Pancreas (tissue), 10 donors: ENCODE measurements at regions of chrX and their contacts with region 1.

Region 1: DNA sequence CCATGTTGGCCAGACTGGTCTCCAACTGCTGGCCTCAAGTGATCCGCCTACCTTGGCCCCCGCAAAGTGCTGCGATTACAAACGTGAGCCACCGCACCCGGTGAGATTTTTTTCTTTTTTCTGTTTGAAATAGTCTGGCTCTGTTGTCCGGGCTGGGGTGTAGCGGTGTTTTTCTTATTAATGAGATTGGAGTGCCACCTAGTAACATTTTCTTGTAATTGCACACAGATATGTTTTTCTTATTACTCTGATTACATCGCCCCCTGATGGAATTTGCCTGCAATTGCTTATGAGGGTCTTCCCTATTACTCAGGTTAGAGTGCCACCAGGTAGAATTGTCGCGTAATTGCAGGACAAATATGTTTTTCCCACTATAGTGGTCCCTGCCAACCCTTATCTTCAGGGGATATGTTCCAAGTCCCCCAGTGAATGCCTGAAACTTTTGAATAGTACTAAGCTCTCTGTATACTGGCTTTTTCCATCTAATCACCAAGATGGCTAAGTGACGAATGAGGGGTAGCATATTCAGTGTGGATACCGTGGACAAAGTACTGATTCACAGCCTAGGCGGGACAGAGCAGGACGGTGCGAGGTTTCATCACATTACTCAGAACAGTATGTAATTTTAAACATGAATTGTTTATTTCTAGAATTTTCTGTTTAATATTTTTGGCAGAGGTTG is 8.6 kb upstream of the PDHA1 start:
- DNase-seq: no peak
- ATAC-seq: peak in 2 of 4 donors; percentile 46 to 61
- H3K4me3 ChIP-seq: no peak overlapping the region
- H3K27ac ChIP-seq: no peak overlapping the region
- H3K4me1 ChIP-seq: no peaks in the 10 kb centered on the region
- H3K27me3 ChIP-seq: no peaks in the 10 kb centered on the region
- CTCF ChIP-seq: no peak

Region 2: DNA sequence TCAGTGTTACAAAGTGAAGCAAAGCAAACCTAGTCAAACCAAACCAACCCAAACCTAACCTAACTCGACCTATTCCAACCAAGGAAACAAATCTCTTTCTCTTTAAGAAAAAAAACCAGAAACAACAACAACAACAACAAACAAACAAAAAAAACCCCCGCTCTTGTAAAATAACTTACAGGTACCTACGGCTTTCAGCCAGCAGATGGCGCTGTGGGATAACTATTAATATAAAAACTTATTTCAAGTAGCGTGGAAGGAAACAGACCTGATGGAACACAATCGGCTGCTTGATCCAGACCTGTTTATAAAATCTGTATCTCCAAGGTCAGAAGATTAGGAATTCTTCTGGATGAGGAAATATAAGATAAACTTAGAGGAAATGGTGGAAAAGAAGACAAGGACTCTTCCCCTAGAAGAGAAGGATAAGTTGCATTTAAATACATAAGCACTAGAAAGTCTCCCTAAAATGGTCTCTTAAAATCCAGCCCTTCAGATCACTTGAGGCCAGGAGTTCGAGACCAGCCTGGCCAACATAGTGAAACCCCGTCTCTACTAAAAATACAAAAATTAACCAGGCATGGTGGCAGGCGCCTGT is 944.0 kb before region 1 on chrX:
- intact Hi-C with region 1: loop called in 2 of 3 experiments (anchors 5 to 10 kb)
- DNase-seq: peak in 5 of 6 donors; percentile 10 to 88 (median 65)
- ATAC-seq: peak in 3 of 4 donors; percentile 74 to 75 (median 75)
- H3K4me3 ChIP-seq: no peak overlapping the region
- H3K27ac ChIP-seq: no peak overlapping the region
- H3K4me1 ChIP-seq: no peaks in the 10 kb centered on the region
- H3K27me3 ChIP-seq: peaks cover 0 to 6% (median 2%) of the 10 kb centered on the region in 4 donors
- CTCF ChIP-seq: peak; percentile 70 to 86 (median 76)

Region 3: DNA sequence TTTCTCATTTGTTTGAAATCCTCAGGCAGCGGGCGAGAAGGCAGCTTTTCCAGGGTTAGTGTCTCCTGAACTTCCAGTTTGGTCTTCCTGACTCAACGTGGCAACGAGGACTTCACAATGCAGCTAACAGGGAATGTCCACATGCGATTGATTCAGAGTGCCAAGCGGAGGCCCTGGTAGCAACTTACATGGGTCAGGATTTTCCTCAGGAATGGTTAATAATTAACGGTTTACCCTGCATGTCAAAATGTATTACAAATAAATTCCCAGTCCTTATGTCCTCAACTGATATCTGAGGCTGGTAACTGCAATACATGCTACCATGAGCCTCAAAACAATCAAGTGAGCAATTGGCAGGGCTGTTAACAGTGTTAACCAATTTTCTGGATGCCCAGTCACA is 113.0 kb after region 1 on chrX:
- intact Hi-C with region 1: no loop called
- DNase-seq: peak in 3 of 6 donors; percentile 2 to 16 (median 16)
- ATAC-seq: peak; percentile 40 to 88 (median 84)
- H3K4me3 ChIP-seq: no peak overlapping the region
- H3K27ac ChIP-seq: no peak overlapping the region
- H3K4me1 ChIP-seq: no peaks in the 10 kb centered on the region
- H3K27me3 ChIP-seq: no peaks in the 10 kb centered on the region
- CTCF ChIP-seq: no peak